Breast epithelium (tissue), 4 donors: ENCODE measurements at regions of chr13 and their contacts with region 1.

Region 1: DNA sequence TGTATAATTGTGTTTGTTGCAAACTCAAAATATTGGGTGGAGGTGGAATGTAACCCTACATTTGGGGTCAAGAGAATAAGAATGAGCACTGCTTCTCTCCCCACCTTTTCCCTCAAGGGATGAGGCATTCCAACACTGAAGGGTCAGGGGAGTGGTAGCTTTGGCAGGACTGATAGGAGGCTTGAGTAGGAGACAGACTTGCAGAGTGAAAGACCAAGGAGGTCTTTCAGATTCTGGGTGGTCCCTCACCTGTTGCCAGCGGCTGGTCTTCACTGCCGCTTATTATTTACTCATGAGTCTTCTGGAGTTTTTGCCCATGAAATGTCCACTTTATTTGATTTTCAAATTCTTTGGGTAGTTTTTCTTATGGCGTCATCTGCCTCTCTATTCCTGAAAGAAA is 118.8 kb downstream of the LMO7 start:
- DNase-seq: no peak
- H3K4me3 ChIP-seq: no peak overlapping the region
- H3K27ac ChIP-seq: no peak overlapping the region
- H3K4me1 ChIP-seq: no peaks in the 10 kb centered on the region
- H3K27me3 ChIP-seq: no peaks in the 10 kb centered on the region
- CTCF ChIP-seq: no peak
- POLR2A ChIP-seq: no peak

Region 2: GRCh38 chr13:75789206-75790197 is 34.6 kb after region 1 on chr13:
- intact Hi-C with region 1: loop called (anchors 2 kb)
- DNase-seq: no peak
- H3K4me3 ChIP-seq: no peak overlapping the region
- H3K27ac ChIP-seq: no peak overlapping the region
- H3K4me1 ChIP-seq: no peaks in the 10 kb centered on the region
- H3K27me3 ChIP-seq: no peaks in the 10 kb centered on the region
- CTCF ChIP-seq: no peak
- POLR2A ChIP-seq: no peak